ENCODE measurements at regions of chr1 and their contacts with region 1.

Region 1: GRCh38 chr1:225720937-225721336 is 56.7 kb upstream of the SRP9 start:
- DNase-seq: no peak
- H3K4me3 ChIP-seq: no peak overlapping the region
- H3K27ac ChIP-seq: no peak overlapping the region
- H3K4me1 ChIP-seq: no peaks in the 10 kb centered on the region
- H3K27me3 ChIP-seq: no peaks in the 10 kb centered on the region
- CTCF ChIP-seq: no peak
- POLR2A ChIP-seq: no peak

Region 2: GRCh38 chr1:225677350-225678124 is 43.4 kb before region 1 on chr1:
- intact Hi-C with region 1: loop called (anchors 2 kb)
- DNase-seq: no peak
- H3K4me3 ChIP-seq: peak overlapping the region in 2 of 3 donors; percentile 27 to 62
- H3K27ac ChIP-seq: no peak overlapping the region
- H3K4me1 ChIP-seq: no peaks in the 10 kb centered on the region
- H3K27me3 ChIP-seq: no peaks in the 10 kb centered on the region
- CTCF ChIP-seq: no peak
- POLR2A ChIP-seq: no peak

Region 3: DNA sequence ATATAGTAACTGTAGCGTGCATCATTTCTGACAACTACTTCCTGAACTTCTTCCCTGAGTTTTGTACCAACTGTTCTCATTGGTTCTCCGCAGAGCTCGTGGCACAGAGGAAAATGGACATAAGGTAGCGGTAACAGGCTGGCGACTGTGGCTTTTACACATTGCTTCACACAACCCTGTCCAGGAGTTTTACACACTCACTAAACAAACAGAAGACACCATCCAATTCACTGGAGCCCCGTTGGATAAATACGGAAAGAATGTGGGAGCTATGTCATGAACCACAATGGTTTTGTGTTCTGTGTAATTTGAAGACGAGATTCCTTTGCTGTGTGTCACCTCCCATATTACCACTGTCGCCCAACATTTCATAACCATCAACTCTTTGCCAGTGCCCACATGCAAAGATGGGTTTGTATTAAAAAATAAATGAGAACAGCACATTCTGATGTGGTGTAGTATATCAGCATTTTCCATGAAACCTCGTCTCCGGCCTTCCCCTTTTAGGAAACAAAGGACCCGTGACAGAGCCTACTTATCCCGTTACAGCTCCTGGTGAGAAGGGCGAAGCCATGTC is 20.7 kb before region 1 on chr1:
- intact Hi-C with region 1: no loop called
- DNase-seq: peak in 1 of 2 donors; percentile 78
- H3K4me3 ChIP-seq: no peak overlapping the region
- H3K27ac ChIP-seq: peak overlapping the region; percentile 80 to 84
- H3K4me1 ChIP-seq: peaks cover 0 to 12% of the 10 kb centered on the region in 2 donors
- H3K27me3 ChIP-seq: no peaks in the 10 kb centered on the region
- CTCF ChIP-seq: no peak
- POLR2A ChIP-seq: no peak